Endothelial cell of umbilical vein (primary cell): ENCODE measurements at regions of chr2 and their contacts with region 1.

Region 1: DNA sequence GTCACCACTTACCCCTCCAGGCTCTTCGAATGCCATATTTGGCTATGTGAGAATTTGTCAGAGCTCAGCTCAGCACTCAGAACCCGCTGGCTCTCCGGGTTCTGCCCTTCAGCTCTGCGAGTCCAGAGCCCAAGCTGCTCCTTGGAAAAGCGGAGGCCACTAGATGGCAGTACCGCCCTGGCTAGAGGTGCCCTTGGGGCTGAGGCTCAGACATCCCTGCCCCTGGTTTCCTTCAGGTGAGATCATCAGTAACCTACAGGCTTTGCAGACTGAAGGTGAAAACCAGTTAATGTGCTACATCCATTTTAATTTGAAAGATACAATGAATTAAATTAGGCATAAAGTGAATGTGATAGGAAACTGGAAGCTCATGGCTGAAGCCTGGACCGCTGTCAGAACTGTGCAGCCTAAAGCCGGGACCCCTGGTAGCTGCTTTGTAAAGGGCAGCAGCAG is 285.6 kb downstream of the AGAP1 start:
- DNase-seq: peak; percentile 74
- H3K4me3 ChIP-seq: no peak overlapping the region
- H3K27ac ChIP-seq: no peak overlapping the region
- H3K4me1 ChIP-seq: no peaks in the 10 kb centered on the region
- H3K27me3 ChIP-seq: no peaks in the 10 kb centered on the region
- CTCF ChIP-seq: peak; percentile 89 to 90
- POLR2A ChIP-seq: no peak

Region 2: GRCh38 chr2:235793163-235793752 is 13.8 kb after region 1 on chr2:
- CTCF ChIA-PET with region 1: interaction called, 38 read pairs
- POLR2A ChIA-PET with region 1: no interaction called
- dilution Hi-C with region 1: no loop called
- intact Hi-C with region 1: no loop called
- DNase-seq: peak; percentile 24
- H3K4me3 ChIP-seq: no peak overlapping the region
- H3K27ac ChIP-seq: no peak overlapping the region
- H3K4me1 ChIP-seq: no peaks in the 10 kb centered on the region
- H3K27me3 ChIP-seq: no peaks in the 10 kb centered on the region
- CTCF ChIP-seq: peak; percentile 27 to 57
- POLR2A ChIP-seq: no peak

Region 3: GRCh38 chr2:235940330-235940729 is 160.9 kb after region 1 on chr2:
- CTCF ChIA-PET with region 1: interaction called, 11 read pairs
- POLR2A ChIA-PET with region 1: no interaction called
- dilution Hi-C with region 1: no loop called
- intact Hi-C with region 1: loop called (anchors 1 kb)
- DNase-seq: no peak
- H3K4me3 ChIP-seq: no peak overlapping the region
- H3K27ac ChIP-seq: no peak overlapping the region
- H3K4me1 ChIP-seq: peaks cover 3% of the 10 kb centered on the region
- H3K27me3 ChIP-seq: no peaks in the 10 kb centered on the region
- CTCF ChIP-seq: no peak
- POLR2A ChIP-seq: no peak

Region 4: DNA sequence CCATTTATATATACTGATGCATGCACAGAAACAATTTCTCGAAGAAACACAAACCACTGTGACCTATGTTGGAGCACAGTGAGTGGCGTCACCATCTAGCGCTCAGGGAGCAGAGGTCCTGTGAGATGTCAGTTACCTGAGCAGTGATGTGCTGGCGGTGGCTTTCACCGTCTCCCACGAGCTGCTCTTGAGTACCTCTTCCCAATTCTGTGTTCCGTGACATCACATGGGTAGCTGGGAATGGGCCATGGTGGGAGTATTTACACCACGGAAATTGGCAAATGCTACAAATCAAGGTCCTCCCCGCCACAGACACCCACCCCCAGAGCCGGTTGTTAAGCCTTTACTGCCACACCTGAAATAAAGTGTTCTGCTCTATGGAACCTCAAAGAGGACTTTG is 364.3 kb after region 1 on chr2:
- CTCF ChIA-PET with region 1: interaction called, 10 read pairs
- POLR2A ChIA-PET with region 1: no interaction called
- dilution Hi-C with region 1: no loop called
- intact Hi-C with region 1: no loop called
- DNase-seq: no peak
- H3K4me3 ChIP-seq: no peak overlapping the region
- H3K27ac ChIP-seq: no peak overlapping the region
- H3K4me1 ChIP-seq: no peaks in the 10 kb centered on the region
- H3K27me3 ChIP-seq: no peaks in the 10 kb centered on the region
- CTCF ChIP-seq: no peak
- POLR2A ChIP-seq: no peak

Region 5: GRCh38 chr2:236309669-236310029 is 530.2 kb after region 1 on chr2:
- CTCF ChIA-PET with region 1: interaction called, 18 read pairs
- POLR2A ChIA-PET with region 1: no interaction called
- dilution Hi-C with region 1: no loop called
- intact Hi-C with region 1: no loop called
- DNase-seq: peak; percentile 39
- H3K4me3 ChIP-seq: no peak overlapping the region
- H3K27ac ChIP-seq: no peak overlapping the region
- H3K4me1 ChIP-seq: no peaks in the 10 kb centered on the region
- H3K27me3 ChIP-seq: no peaks in the 10 kb centered on the region
- CTCF ChIP-seq: peak; percentile 61 to 76
- POLR2A ChIP-seq: no peak